ENCODE measurements at regions of chr20 and their contacts with region 1.

Region 1: GRCh38 chr20:37990571-37991151 is 42.6 kb downstream of the TTI1 start:
- DNase-seq: peak; percentile 96
- ATAC-seq: peak; percentile 89
- H3K4me3 Mint-ChIP-seq: peak overlapping the region; percentile 18
- H3K27ac Mint-ChIP-seq: peak overlapping the region; percentile 87
- H3K4me1 Mint-ChIP-seq: peaks cover 37% of the 10 kb centered on the region
- H3K27me3 Mint-ChIP-seq: no peaks in the 10 kb centered on the region

Region 2: GRCh38 chr20:37564388-37565133 is 426.1 kb before region 1 on chr20:
- CTCF ChIA-PET with region 1: interaction called, 37 read pairs
- DNase-seq: no peak
- ATAC-seq: peak; percentile 65
- H3K4me3 Mint-ChIP-seq: no peak overlapping the region
- H3K27ac Mint-ChIP-seq: no peak overlapping the region
- H3K4me1 Mint-ChIP-seq: no peaks in the 10 kb centered on the region
- H3K27me3 Mint-ChIP-seq: peaks cover 53% of the 10 kb centered on the region

Region 3: GRCh38 chr20:37968841-37969401 is 21.7 kb before region 1 on chr20:
- CTCF ChIA-PET with region 1: no interaction called
- DNase-seq: no peak
- ATAC-seq: no peak
- H3K4me3 Mint-ChIP-seq: no peak overlapping the region
- H3K27ac Mint-ChIP-seq: no peak overlapping the region
- H3K4me1 Mint-ChIP-seq: no peaks in the 10 kb centered on the region
- H3K27me3 Mint-ChIP-seq: peaks cover 17% of the 10 kb centered on the region

Region 4: DNA sequence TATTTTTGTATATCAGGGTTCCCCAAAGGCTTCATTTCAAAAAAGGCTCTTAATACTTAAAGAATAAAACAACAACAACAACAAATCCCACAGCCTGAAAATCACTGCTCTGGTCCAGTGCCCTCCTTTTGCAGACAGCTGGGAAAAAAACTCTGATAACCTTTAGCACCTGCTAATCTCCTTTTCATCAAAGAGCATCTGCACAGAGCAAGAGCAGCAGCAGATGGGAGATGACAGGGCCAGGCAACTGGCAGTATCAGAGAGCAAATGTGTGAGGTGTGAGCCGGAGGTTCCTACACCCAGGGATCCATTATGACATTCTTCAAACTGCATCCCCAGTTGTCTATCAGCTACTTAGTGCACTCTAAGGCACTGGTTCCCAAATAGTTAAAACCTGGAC is 16.9 kb after region 1 on chr20:
- CTCF ChIA-PET with region 1: interaction called, 14 read pairs
- DNase-seq: no peak
- ATAC-seq: no peak
- H3K4me3 Mint-ChIP-seq: no peak overlapping the region
- H3K27ac Mint-ChIP-seq: no peak overlapping the region
- H3K4me1 Mint-ChIP-seq: peaks cover 15% of the 10 kb centered on the region
- H3K27me3 Mint-ChIP-seq: no peaks in the 10 kb centered on the region